GM10248 (cell line): ENCODE measurements at regions of chr2 and their contacts with region 1.

Region 1: DNA sequence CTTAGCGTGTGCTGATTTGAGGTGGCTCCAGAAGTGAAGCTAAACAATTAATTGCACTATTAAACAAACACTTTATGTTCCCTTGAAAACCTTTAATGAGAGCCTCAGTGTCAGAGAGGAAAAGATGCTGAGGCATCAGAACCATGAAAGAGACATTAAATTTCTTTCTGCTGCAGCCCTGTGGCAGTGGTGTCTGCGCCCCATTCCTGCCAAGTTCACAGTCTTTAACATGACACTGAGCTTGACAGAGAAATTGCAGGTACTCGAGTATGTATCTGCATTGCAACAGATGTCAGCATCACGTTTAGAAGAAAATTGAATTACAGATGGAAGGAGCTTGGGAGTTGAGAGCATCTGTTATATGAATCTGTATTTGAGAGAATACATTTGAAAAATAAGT is 111.3 kb upstream of the CREB1 start:
- DNase-seq: no peak
- CTCF ChIP-seq: no peak

Region 2: GRCh38 chr2:206814498-206814897 is 603.9 kb before region 1 on chr2:
- CTCF ChIA-PET with region 1: no interaction called
- POLR2A ChIA-PET with region 1: no interaction called
- DNase-seq: no peak
- CTCF ChIP-seq: no peak

Region 3: DNA sequence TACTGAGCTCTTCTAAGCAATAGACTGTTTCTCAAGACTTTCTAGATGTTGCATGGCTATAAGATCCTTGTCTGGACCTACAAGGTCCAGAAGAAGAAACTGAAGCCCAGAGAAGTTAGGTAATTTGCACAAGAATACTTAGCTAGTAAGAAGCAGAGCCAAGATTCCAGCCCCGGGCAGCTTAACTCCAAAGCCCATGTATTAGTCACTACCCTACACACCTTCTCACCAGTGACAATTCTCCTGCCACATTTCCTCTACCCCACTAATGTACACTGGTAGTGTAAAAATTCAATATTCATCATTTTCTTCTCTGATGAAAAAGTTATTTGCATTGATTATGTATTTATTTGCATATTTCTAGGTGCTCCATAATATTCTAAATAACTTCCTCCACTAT is 15.9 kb after region 1 on chr2:
- CTCF ChIA-PET with region 1: interaction called, 11 read pairs
- POLR2A ChIA-PET with region 1: no interaction called
- DNase-seq: no peak
- CTCF ChIP-seq: no peak